HEK293 (cell line): ENCODE measurements at regions of chr4 and their contacts with region 1.

Region 1: GRCh38 chr4:110636680-110637407 is 14.0 kb upstream of the PITX2 start:
- H3K4me3 ChIP-seq: peak overlapping the region; percentile 45
- H3K27ac ChIP-seq: peak overlapping the region; percentile 80
- H3K4me1 ChIP-seq: no peaks in the 10 kb centered on the region
- CTCF ChIP-seq: no peak

Region 2: DNA sequence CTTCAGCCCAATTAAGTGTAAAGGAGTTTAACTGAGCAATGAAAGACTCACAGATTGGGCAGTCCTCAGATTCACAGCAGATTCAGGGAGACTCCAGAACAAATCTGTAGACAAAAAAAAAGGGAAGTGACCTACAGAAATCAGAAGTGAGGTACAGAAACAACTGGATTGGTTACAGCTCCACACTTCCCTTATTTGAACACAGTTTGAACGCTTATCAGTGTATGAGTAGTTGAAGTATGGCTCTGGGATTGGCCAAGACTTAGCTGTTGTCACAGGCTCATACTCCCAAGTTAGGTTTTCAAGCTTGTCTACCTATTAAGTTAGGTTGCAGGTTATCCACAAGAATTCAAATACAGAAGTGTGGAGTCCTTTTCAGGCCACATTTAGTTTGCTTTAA is 326.0 kb before region 1 on chr4:
- CTCF ChIA-PET with region 1: no interaction called
- POLR2A ChIA-PET with region 1: no interaction called
- H3K4me3 ChIP-seq: no peak overlapping the region
- H3K27ac ChIP-seq: no peak overlapping the region
- H3K4me1 ChIP-seq: no peaks in the 10 kb centered on the region
- CTCF ChIP-seq: no peak

Region 3: GRCh38 chr4:110622841-110623717 is 13.8 kb before region 1 on chr4 and contains the start of gene PITX2:
- CTCF ChIA-PET with region 1: no interaction called
- POLR2A ChIA-PET with region 1: interaction called, 14 read pairs
- H3K4me3 ChIP-seq: peak within 1 kb of the TSS; percentile 65
- H3K27ac ChIP-seq: peak within 1 kb of the TSS; percentile 57
- H3K4me1 ChIP-seq: peaks cover 12% of the 10 kb centered on the region; the same call in 1 of the 2 replicates
- CTCF ChIP-seq: no peak